Caco-2 (cell line): ENCODE measurements at regions of chr6 and their contacts with region 1.

Region 1: GRCh38 chr6:142474531-142475289 is 172.9 kb downstream of the ADGRG6 start:
- DNase-seq: peak; percentile 67 to 69
- H3K4me3 ChIP-seq: no peak overlapping the region
- H3K4me3 Mint-ChIP-seq: no peak overlapping the region
- H3K27ac Mint-ChIP-seq: no peak overlapping the region
- H3K4me1 ChIP-seq: no peaks in the 10 kb centered on the region
- H3K4me1 Mint-ChIP-seq: no peaks in the 10 kb centered on the region
- H3K27me3 ChIP-seq: no peaks in the 10 kb centered on the region
- H3K27me3 Mint-ChIP-seq: peaks cover 1% of the 10 kb centered on the region
- CTCF ChIP-seq: peak; percentile 57 to 60

Region 2: DNA sequence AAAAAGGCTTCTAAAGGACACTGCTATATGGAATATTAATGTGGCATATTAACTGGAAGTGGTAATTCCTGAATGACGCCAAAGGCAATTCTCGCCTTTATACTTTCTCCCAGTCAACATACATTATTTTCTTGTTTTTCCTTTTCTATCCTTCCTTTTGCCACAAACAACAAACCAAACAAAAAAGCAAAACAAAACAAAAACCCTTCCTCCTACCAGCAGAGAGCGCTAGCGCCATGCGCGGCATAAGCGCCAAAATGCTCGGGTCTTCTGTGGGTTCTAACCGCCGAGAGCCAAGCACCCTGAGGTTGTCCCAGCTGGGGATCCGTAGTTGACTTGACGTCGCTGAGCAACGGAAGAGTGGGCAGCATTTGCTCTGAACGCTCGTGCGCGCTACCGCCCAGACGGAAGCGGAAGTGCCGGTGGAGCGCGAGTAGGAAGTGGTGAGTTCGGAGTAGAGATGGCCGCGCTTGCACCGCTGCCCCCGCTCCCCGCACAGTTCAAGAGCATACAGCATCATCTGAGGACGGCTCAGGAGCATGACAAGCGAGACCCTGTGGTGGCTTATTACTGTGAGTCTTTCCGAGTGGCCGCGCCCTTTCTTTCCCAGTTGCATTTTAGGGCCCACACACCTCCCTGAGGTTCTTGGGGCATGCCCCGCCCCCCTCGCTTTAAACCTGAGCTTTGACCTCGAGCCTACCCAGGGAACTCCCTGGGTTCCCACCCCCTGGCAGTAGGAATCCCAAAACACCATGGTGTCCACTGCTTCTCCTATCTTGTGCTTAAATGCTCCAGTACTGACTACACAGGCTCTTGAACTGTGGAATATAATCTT is 327.7 kb before region 1 on chr6 and contains the starts of genes NMBR and VTA1:
- CTCF ChIA-PET with region 1: interaction called, 3 read pairs
- POLR2A ChIA-PET with region 1: no interaction called
- intact Hi-C with region 1: loop called (anchors 5 kb)
- DNase-seq: peak; percentile 97 to 99
- H3K4me3 ChIP-seq: peak within 1 kb of the TSS; percentile 55
- H3K4me3 Mint-ChIP-seq: peak within 1 kb of the TSS; percentile 96
- H3K27ac Mint-ChIP-seq: peak within 1 kb of the TSS; percentile 85
- H3K4me1 ChIP-seq: no peaks in the 10 kb centered on the region
- H3K4me1 Mint-ChIP-seq: peaks cover 21% of the 10 kb centered on the region
- H3K27me3 ChIP-seq: no peaks in the 10 kb centered on the region
- H3K27me3 Mint-ChIP-seq: peaks cover 7% of the 10 kb centered on the region
- CTCF ChIP-seq: peak; percentile 85 to 91
- total RNA-seq, gene NMBR: not detected in 2 replicates
- total RNA-seq, gene VTA1: 51.1 and 55.1 TPM in 2 replicates

Region 3: GRCh38 chr6:142537612-142538478 is 63.1 kb after region 1 on chr6:
- CTCF ChIA-PET with region 1: no interaction called
- POLR2A ChIA-PET with region 1: no interaction called
- intact Hi-C with region 1: loop called (anchors 1 kb)
- DNase-seq: peak in 1 of 2 experiments; percentile 19
- H3K4me3 ChIP-seq: no peak overlapping the region
- H3K4me3 Mint-ChIP-seq: no peak overlapping the region
- H3K27ac Mint-ChIP-seq: no peak overlapping the region
- H3K4me1 ChIP-seq: no peaks in the 10 kb centered on the region
- H3K4me1 Mint-ChIP-seq: no peaks in the 10 kb centered on the region
- H3K27me3 ChIP-seq: no peaks in the 10 kb centered on the region
- H3K27me3 Mint-ChIP-seq: no peaks in the 10 kb centered on the region
- CTCF ChIP-seq: peak; percentile 5 to 40

Region 4: DNA sequence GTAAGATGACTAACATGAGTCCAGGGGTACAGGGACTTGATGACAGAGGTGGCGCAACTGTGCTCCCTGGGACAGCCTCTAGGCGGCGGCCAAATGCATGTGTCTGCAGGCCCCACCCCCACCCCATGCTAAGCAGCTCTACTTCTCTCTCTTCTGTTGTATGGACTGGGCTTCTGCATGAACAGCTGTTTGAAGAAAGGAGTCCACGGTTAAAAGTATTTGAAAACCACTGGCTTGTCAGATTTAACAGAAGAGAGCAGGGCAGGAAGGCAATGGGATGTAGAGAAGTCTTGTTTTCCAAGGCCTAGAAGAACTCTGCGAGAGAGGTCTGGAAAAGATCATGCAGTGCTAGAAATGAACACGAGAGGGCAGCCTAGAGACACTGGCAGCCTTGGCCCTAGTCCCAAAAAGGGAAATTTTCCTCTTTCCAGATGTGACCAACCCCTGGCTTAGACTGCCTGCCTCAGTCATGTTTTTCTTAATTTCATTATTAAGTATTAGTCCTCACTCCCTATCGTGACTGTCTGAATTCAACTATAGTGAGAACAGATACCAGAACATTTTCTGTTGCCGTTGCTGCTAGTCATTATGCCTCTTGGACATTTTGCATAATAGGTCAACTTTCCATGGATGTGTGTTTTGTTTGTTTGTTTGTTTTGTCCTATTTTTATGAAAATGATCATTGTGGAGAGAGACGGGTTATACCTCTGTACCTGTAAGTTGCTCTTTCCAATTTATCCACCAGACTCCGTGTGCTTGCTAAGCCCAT is 92.1 kb after region 1 on chr6:
- CTCF ChIA-PET with region 1: interaction called, 11 read pairs
- POLR2A ChIA-PET with region 1: no interaction called
- intact Hi-C with region 1: loop called (anchors 2 kb)
- DNase-seq: peak; percentile 53 to 79
- H3K4me3 ChIP-seq: no peak overlapping the region
- H3K4me3 Mint-ChIP-seq: no peak overlapping the region
- H3K27ac Mint-ChIP-seq: no peak overlapping the region
- H3K4me1 ChIP-seq: no peaks in the 10 kb centered on the region
- H3K4me1 Mint-ChIP-seq: no peaks in the 10 kb centered on the region
- H3K27me3 ChIP-seq: no peaks in the 10 kb centered on the region
- H3K27me3 Mint-ChIP-seq: peaks cover 6% of the 10 kb centered on the region
- CTCF ChIP-seq: peak; percentile 77 to 79

Region 5: DNA sequence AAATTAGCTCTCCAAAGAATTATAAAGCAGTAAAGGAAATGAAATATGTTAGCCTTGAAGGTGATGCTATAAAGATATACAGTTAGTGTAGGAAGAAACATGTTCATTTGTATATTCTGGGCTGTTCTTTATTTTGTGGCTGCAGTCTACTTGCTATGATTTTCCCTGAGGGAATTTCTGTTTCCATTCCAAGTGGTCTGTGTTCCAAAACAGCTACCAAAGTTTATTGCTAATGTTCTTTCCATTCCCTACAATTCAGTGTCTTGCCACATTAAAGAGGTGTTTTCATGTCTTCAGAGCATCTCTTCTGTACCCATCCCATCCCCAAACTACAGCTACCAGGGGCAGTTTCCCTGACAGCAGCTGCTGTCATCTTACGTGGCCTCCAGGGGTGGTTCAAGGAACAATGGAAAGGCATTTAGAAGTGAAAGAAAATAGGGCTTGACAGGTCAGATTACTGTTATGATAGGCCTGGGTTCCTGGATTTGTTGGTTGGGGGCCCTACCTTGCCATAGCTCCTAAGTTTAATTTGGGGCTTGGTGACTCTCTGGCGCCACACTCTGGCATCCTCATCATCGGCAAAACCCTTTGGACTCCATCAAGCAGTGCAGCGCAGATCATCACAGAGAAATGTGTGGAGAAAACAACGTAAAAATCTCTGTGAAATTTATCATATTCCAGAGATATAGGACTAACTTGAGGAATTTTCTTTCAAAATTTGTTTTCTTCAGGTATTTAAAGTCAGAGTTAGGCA is 552.2 kb after region 1 on chr6:
- CTCF ChIA-PET with region 1: interaction called, 10 read pairs
- POLR2A ChIA-PET with region 1: no interaction called
- intact Hi-C with region 1: loop called (anchors 10 kb)
- DNase-seq: peak in 1 of 2 experiments; percentile 25
- H3K4me3 ChIP-seq: no peak overlapping the region
- H3K4me3 Mint-ChIP-seq: no peak overlapping the region
- H3K27ac Mint-ChIP-seq: no peak overlapping the region
- H3K4me1 ChIP-seq: no peaks in the 10 kb centered on the region
- H3K4me1 Mint-ChIP-seq: no peaks in the 10 kb centered on the region
- H3K27me3 ChIP-seq: no peaks in the 10 kb centered on the region
- H3K27me3 Mint-ChIP-seq: no peaks in the 10 kb centered on the region
- CTCF ChIP-seq: peak; percentile 30 to 44